ENCODE measurements at regions of chr15 and their contacts with region 1.

Region 1: GRCh38 chr15:100349696-100350433 is 8.1 kb upstream of the ADAMTS17 start:
- DNase-seq: peak; percentile 93
- ATAC-seq: peak; percentile 95
- H3K4me3 Mint-ChIP-seq: peak overlapping the region; percentile 78
- H3K27ac Mint-ChIP-seq: peak overlapping the region; percentile 77
- H3K4me1 Mint-ChIP-seq: peaks cover 7% of the 10 kb centered on the region
- H3K27me3 Mint-ChIP-seq: peaks cover 7% of the 10 kb centered on the region

Region 2: GRCh38 chr15:100383302-100384107 is 33.6 kb after region 1 on chr15:
- CTCF ChIA-PET with region 1: interaction called, 32 read pairs
- POLR2A ChIA-PET with region 1: no interaction called
- intact Hi-C with region 1: loop called in 1 of 2 experiments (anchors 1 kb)
- DNase-seq: peak; percentile 26
- ATAC-seq: no peak
- H3K4me3 Mint-ChIP-seq: no peak overlapping the region
- H3K27ac Mint-ChIP-seq: no peak overlapping the region
- H3K4me1 Mint-ChIP-seq: no peaks in the 10 kb centered on the region
- H3K27me3 Mint-ChIP-seq: peaks cover 1% of the 10 kb centered on the region

Region 3: DNA sequence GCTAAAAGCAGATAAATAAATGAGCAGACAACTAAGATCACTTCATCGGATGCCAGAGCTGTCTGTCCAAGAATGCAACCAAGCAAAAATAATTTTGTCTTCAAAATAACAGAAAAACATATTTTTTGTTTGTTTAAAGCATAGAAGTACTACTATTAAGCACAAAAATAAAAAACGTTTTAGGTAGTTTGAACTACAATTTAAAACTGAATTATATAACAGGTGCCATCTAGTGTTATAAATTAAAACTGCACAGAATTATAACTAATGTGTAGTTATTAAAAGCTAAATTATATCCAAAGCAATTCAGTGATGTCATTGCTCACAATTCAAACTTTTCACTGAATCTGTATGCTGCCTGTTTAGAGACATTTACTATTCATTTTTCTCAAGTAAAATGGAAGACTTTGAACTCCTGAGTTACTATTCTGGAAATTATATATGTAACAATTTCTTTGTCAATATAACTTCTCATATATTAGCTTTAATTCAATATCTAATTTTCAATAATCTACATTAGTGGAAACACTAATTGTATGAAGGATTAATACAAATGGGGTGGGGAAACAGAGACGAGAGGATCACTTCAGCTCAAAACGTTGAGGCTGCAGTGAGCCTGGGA is 222.6 kb after region 1 on chr15:
- CTCF ChIA-PET with region 1: interaction called, 46 read pairs
- POLR2A ChIA-PET with region 1: no interaction called
- intact Hi-C with region 1: loop called in 1 of 2 experiments (anchors 1 kb)
- DNase-seq: no peak
- ATAC-seq: no peak
- H3K4me3 Mint-ChIP-seq: no peak overlapping the region
- H3K27ac Mint-ChIP-seq: peak overlapping the region; percentile 65
- H3K4me1 Mint-ChIP-seq: peaks cover 55% of the 10 kb centered on the region
- H3K27me3 Mint-ChIP-seq: no peaks in the 10 kb centered on the region